ENCODE measurements at regions of chr2 and their contacts with region 1.

Region 1: DNA sequence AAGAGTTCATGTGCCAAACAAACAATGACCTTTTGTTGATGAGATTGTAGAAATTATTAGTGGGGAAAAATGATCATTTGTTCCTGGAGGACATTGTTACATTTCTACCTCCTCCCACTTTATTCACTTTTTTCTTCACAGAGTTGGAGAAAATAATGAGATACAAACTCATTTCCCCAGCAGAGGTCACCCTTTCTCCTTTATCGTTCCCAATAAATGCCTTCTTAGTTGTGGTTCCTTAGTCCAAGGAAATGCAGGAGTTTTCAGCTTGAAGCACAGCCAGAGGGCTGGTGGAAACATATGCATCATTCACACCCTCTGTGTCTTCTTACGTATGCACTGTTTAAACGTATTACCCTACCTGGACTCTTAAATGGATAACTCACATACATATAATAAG is 108.8 kb downstream of the SLC4A3 start:
- DNase-seq: peak in 1 of 5 donors; percentile 37
- H3K4me3 ChIP-seq: no peak overlapping the region
- H3K27ac ChIP-seq: no peak overlapping the region
- H3K4me1 ChIP-seq: peaks cover 9% of the 10 kb centered on the region
- H3K27me3 ChIP-seq: no peaks in the 10 kb centered on the region
- CTCF ChIP-seq: peak; percentile 44 to 68 (median 55)
- EP300 ChIP-seq: no peak
- POLR2A ChIP-seq: no peak

Region 2: GRCh38 chr2:219836647-219837177 is 100.5 kb after region 1 on chr2:
- intact Hi-C with region 1: loop called in 3 of 4 experiments (anchors 2 to 10 kb)
- DNase-seq: peak in 1 of 5 donors; percentile 35
- H3K4me3 ChIP-seq: no peak overlapping the region
- H3K27ac ChIP-seq: no peak overlapping the region
- H3K4me1 ChIP-seq: no peaks in the 10 kb centered on the region
- H3K27me3 ChIP-seq: no peaks in the 10 kb centered on the region
- CTCF ChIP-seq: peak in 2 of 3 donors; percentile 37 to 44
- EP300 ChIP-seq: no peak
- POLR2A ChIP-seq: no peak

Measured in ovary (tissue), 10 donors.